BJ (cell line): ENCODE measurements at regions of chr6 and their contacts with region 1.

Region 1: DNA sequence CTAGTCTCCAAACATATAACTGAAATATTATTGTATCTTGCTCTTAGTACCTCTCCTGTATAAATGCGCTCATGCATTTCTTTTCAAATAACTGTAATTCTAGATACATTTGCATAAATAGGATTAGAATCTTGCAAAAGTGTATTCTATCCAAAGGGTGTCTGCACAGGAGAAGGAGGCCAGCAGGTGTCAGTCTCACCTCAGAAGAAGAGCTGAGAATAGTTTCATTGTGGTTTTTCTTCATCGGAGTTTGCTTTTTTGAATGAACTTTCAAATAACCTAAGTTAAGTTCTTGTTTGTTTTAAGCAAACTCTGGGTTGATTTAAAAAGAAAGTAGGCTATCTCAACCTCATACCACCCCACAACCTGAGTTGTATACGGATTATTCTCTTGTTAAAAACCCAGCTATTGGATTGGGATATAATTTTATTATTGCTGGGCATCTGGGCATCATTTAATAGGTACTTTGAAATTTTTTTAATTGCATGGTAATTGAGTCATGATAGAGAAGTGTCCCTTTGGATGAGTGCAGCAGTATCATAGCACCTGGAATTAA is 125.0 kb upstream of the MLIP start:
- DNase-seq: peak; percentile 24
- H3K4me3 ChIP-seq: no peak overlapping the region
- H3K27me3 ChIP-seq: no peaks in the 10 kb centered on the region
- CTCF ChIP-seq: peak; percentile 82

Region 2: GRCh38 chr6:53556986-53557715 is 429.1 kb before region 1 on chr6:
- CTCF ChIA-PET with region 1: no interaction called
- POLR2A ChIA-PET with region 1: no interaction called
- DNase-seq: no peak
- H3K4me3 ChIP-seq: no peak overlapping the region
- H3K27me3 ChIP-seq: peaks cover 1% of the 10 kb centered on the region; the same call in 1 of the 2 replicates
- CTCF ChIP-seq: no peak

Region 3: DNA sequence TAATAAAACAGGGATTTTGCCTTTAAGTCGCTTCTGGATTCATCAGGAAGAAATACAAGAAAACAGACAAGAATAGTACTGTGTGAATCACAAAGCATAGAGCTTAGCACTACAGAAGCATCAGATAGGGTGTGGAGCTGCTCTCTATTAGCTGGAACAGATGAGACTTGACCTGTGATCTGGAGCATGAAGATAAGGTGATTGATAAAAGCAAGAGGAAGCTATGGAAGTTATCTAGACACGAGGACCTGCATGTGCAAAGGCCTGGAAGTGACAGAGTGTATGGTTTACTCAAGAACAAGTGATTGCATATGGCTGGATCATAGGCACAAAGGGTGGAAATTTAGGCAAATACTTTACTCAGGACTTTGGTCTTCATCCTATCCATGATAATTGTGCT is 12.1 kb after region 1 on chr6:
- CTCF ChIA-PET with region 1: interaction called, 16 read pairs
- POLR2A ChIA-PET with region 1: no interaction called
- DNase-seq: no peak
- H3K4me3 ChIP-seq: no peak overlapping the region
- H3K27me3 ChIP-seq: no peaks in the 10 kb centered on the region
- CTCF ChIP-seq: no peak

Region 4: DNA sequence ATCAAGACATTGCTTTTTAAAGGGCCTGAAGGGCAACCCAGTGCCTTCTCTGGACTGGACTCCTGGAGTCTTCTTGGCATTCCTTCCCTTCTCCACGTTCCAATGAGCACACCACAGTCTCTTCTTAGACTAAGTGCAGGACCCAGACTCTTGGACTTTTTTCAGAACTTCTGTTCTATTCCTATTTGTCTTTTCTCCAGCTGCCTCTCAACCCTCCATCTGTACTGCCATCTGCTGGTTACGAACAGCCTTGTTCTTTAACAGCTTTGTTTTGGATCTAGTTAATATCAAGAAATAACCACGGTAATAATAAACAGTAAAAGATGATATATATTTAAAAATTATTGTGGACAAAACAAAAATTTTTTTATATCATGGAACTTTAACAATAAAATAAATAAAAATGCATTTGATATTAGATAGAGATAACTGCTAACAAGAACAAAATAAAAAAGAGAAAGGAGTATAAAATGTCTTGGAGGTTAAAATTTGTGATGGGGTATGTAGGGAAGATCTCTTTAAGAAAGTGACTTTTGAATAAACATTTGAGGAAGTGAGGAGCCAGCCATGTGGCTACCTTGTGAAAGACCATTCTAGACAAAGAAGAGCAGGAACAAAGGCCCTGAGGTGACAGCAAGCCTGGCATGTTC is 1083.0 kb after region 1 on chr6:
- CTCF ChIA-PET with region 1: interaction called, 14 read pairs
- POLR2A ChIA-PET with region 1: no interaction called
- DNase-seq: no peak
- H3K4me3 ChIP-seq: no peak overlapping the region
- H3K27me3 ChIP-seq: no peaks in the 10 kb centered on the region
- CTCF ChIP-seq: peak; percentile 68